ENCODE measurements at regions of chr3 and their contacts with region 1.

Region 1: GRCh38 chr3:48151058-48151806 is 37.0 kb downstream of the CDC25A start:
- DNase-seq: peak; percentile 76 to 81
- ATAC-seq: peak; percentile 93 to 98 (median 96)
- H3K4me3 ChIP-seq: peak overlapping the region in 1 of 10 donors; percentile 7
- H3K27ac ChIP-seq: peak overlapping the region; percentile 12 to 73 (median 58)
- H3K4me1 ChIP-seq: peaks cover 5 to 21% (median 18%) of the 10 kb centered on the region in 9 donors
- H3K27me3 ChIP-seq: no peaks in the 10 kb centered on the region
- CTCF ChIP-seq: peak; percentile 54 to 94 (median 85)

Region 2: GRCh38 chr3:47824541-47825473 is 326.4 kb before region 1 on chr3:
- intact Hi-C with region 1: loop called in 5 of 10 experiments (anchors 5 kb)
- DNase-seq: peak; percentile 56 to 81
- ATAC-seq: peak; percentile 97 to 99 (median 98)
- H3K4me3 ChIP-seq: peak overlapping the region; percentile 81 to 100 (median 93)
- H3K27ac ChIP-seq: peak overlapping the region; percentile 62 to 89 (median 84)
- H3K4me1 ChIP-seq: peaks cover 6 to 25% (median 23%) of the 10 kb centered on the region in 9 donors
- H3K27me3 ChIP-seq: no peaks in the 10 kb centered on the region
- CTCF ChIP-seq: peak; percentile 67 to 98 (median 89)

Region 3: GRCh38 chr3:47865192-47865591 is 286.0 kb before region 1 on chr3:
- intact Hi-C with region 1: loop called in 1 of 10 experiments (anchors 10 kb)
- DNase-seq: no peak
- ATAC-seq: no peak
- H3K4me3 ChIP-seq: no peak overlapping the region
- H3K27ac ChIP-seq: no peak overlapping the region
- H3K4me1 ChIP-seq: peaks cover 0 to 18% (median under 1%) of the 10 kb centered on the region in 9 donors
- H3K27me3 ChIP-seq: no peaks in the 10 kb centered on the region
- CTCF ChIP-seq: no peak

Region 4: DNA sequence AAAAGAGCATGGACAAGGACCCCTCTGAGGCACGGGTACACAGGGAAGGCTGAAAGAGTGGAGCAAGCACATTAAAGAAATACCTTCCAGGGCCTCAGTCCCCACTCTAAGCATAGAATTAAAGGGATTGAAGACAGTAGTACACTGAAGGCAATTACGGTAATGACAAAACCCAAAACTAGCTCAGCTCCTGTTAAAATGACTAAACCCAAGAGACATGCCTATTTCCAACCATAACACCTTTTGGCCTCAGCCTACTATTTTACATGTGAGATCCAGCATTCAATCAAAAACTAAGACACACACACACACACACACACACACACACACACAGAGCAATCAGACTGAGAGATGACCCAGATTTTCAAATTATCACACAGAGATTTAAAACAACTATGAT is 154.8 kb before region 1 on chr3:
- intact Hi-C with region 1: loop called in 8 of 10 experiments (anchors 2 to 10 kb)
- DNase-seq: no peak
- ATAC-seq: no peak
- H3K4me3 ChIP-seq: no peak overlapping the region
- H3K27ac ChIP-seq: peak overlapping the region in 3 of 10 donors; percentile 12 to 25 (median 24)
- H3K4me1 ChIP-seq: peaks cover 0 to 61% (median 45%) of the 10 kb centered on the region in 9 donors
- H3K27me3 ChIP-seq: no peaks in the 10 kb centered on the region
- CTCF ChIP-seq: no peak

Region 5: DNA sequence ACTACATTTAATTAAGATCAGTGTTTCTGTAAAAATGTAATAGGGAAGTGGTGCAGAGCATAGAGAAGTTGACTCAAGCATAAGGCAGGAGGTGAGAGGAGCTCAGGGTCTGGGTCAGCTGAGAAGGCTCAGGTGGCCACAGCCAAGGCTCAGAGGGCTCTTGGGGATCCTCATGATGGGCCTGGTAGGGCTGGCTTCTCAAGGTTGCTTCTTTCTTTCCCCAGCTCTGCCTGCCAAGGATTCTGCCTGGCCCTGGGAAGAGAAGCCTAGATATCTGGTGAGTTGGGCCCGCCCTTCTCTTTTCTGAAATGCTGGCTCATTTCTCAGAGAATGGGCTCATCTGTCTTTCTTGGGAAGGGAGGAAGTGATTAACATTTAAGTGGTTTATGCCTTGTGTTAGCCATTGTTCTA is 96.2 kb after region 1 on chr3:
- intact Hi-C with region 1: no loop called
- DNase-seq: no peak
- ATAC-seq: peak in 5 of 8 donors; percentile 25 to 48 (median 35)
- H3K4me3 ChIP-seq: no peak overlapping the region
- H3K27ac ChIP-seq: peak overlapping the region in 3 of 10 donors; percentile 34 to 78 (median 36)
- H3K4me1 ChIP-seq: peaks cover 0 to 16% (median 0%) of the 10 kb centered on the region in 9 donors
- H3K27me3 ChIP-seq: no peaks in the 10 kb centered on the region
- CTCF ChIP-seq: no peak

Region 6: GRCh38 chr3:48367201-48367600 is 216.0 kb after region 1 on chr3:
- intact Hi-C with region 1: no loop called
- DNase-seq: peak in 1 of 2 donors; percentile 15
- ATAC-seq: peak in 4 of 8 donors; percentile 41 to 71 (median 62)
- H3K4me3 ChIP-seq: no peak overlapping the region
- H3K27ac ChIP-seq: no peak overlapping the region
- H3K4me1 ChIP-seq: no peaks in the 10 kb centered on the region
- H3K27me3 ChIP-seq: no peaks in the 10 kb centered on the region
- CTCF ChIP-seq: no peak

Measured in heart right ventricle (tissue), 16 donors.